Natural killer cell (primary cell): ENCODE measurements at regions of chr4 and their contacts with region 1.

Region 1: GRCh38 chr4:101596781-101597552 is 193.6 kb upstream of the BANK1 start:
- DNase-seq: peak in 1 of 2 donors; percentile 70
- ATAC-seq: peak; percentile 30 to 55 (median 40)
- H3K4me3 ChIP-seq: no peak overlapping the region
- H3K4me3 Mint-ChIP-seq: no peak overlapping the region
- H3K27ac ChIP-seq: no peak overlapping the region
- H3K27ac Mint-ChIP-seq: no peak overlapping the region
- H3K4me1 ChIP-seq: no peaks in the 10 kb centered on the region
- H3K4me1 Mint-ChIP-seq: no peaks in the 10 kb centered on the region
- H3K27me3 ChIP-seq: no peaks in the 10 kb centered on the region
- H3K27me3 Mint-ChIP-seq: no peaks in the 10 kb centered on the region
- CTCF ChIP-seq: peak; percentile 62

Region 2: DNA sequence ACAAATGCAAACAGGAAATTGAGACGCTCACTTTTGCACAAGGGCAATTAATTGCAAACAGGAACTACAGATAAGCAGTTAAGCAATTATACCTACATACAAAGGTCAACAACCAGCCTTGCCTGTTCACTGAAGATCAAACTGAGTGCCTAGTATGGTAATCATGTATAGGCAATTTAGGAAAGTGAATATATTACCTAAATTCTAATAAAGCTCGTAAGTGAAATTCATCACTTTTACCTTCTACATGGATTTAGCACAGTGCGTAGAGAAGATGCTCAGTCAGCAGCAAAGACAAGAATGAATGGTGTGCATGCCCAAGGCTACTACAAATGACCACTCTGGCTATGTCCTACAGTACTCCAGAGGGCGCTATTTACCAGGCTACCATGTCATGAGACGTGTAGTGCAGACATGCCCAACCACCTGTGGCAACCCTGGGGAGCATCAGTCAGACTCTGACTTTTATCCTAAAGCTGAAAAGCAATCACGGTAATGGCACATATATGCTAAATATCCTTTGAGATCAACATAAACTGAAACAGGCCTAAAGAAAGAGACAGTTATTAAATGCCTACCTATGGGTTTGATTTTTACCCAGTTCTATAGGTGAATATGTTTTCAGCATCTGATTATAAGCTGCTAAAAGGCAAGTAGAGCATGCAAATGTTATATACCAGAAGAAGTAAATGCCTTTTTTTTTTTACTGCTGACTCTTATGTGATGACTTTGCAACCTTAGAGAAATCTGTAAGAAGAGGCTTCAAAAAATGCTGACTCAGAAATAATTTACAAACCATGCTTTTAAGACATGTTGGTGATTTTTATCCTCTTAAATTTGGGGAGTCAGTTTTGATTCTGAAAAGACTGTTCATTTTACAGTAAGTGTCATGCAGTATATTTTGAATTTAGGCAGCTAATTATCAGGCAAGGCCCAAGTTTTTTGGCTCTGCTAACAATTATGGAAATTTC is 427.6 kb before region 1 on chr4:
- intact Hi-C with region 1: loop called (anchors 1 kb)
- DNase-seq: peak; percentile 30 to 81
- ATAC-seq: peak; percentile 94 to 99 (median 99)
- H3K4me3 ChIP-seq: no peak overlapping the region
- H3K4me3 Mint-ChIP-seq: no peak overlapping the region
- H3K27ac ChIP-seq: no peak overlapping the region
- H3K27ac Mint-ChIP-seq: no peak overlapping the region
- H3K4me1 ChIP-seq: no peaks in the 10 kb centered on the region
- H3K4me1 Mint-ChIP-seq: peaks cover 10 to 11% of the 10 kb centered on the region in 2 donors
- H3K27me3 ChIP-seq: no peaks in the 10 kb centered on the region
- H3K27me3 Mint-ChIP-seq: no peaks in the 10 kb centered on the region
- CTCF ChIP-seq: peak; percentile 81

Region 3: DNA sequence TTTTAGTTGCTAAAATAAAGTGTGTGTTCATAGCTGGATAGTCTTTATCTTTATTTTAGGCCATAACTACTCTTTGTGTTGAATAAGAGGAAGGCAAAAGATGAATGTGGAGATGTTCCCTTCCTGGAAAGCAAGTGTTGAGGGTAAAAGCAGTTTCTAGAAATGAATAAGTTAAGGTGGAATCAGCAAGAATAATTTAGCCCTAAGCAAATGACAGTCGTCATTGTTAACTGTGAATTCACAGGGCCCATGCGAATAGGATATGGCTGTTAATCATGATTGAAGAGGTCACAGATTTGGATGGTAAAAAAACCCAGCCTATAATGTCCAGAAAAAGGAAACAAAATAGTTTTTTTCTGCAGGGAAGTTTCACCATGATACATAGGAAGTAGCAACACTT is 81.9 kb before region 1 on chr4:
- intact Hi-C with region 1: no loop called
- DNase-seq: no peak
- ATAC-seq: no peak
- H3K4me3 ChIP-seq: no peak overlapping the region
- H3K4me3 Mint-ChIP-seq: no peak overlapping the region
- H3K27ac ChIP-seq: no peak overlapping the region
- H3K27ac Mint-ChIP-seq: no peak overlapping the region
- H3K4me1 ChIP-seq: no peaks in the 10 kb centered on the region
- H3K4me1 Mint-ChIP-seq: no peaks in the 10 kb centered on the region
- H3K27me3 ChIP-seq: no peaks in the 10 kb centered on the region
- H3K27me3 Mint-ChIP-seq: peaks cover 23 to 61% of the 10 kb centered on the region in 2 donors
- CTCF ChIP-seq: no peak

Region 4: GRCh38 chr4:101555341-101555880 is 41.6 kb before region 1 on chr4:
- intact Hi-C with region 1: no loop called
- DNase-seq: no peak
- ATAC-seq: no peak
- H3K4me3 ChIP-seq: no peak overlapping the region
- H3K4me3 Mint-ChIP-seq: no peak overlapping the region
- H3K27ac ChIP-seq: no peak overlapping the region
- H3K27ac Mint-ChIP-seq: no peak overlapping the region
- H3K4me1 ChIP-seq: no peaks in the 10 kb centered on the region
- H3K4me1 Mint-ChIP-seq: no peaks in the 10 kb centered on the region
- H3K27me3 ChIP-seq: no peaks in the 10 kb centered on the region
- H3K27me3 Mint-ChIP-seq: peaks cover 4 to 18% of the 10 kb centered on the region in 2 donors
- CTCF ChIP-seq: no peak